ENCODE measurements at regions of chr9 and their contacts with region 1.

Region 1: GRCh38 chr9:84315278-84315877 is 25.2 kb downstream of the SLC28A3 start:
- DNase-seq: peak; percentile 75
- ATAC-seq: peak; percentile 80
- H3K4me3 Mint-ChIP-seq: no peak overlapping the region
- H3K27ac Mint-ChIP-seq: no peak overlapping the region
- H3K4me1 Mint-ChIP-seq: peaks cover 2% of the 10 kb centered on the region
- H3K27me3 Mint-ChIP-seq: no peaks in the 10 kb centered on the region

Region 2: GRCh38 chr9:83937911-83938323 is 377.5 kb before region 1 on chr9:
- CTCF ChIA-PET with region 1: interaction called, 6 read pairs
- POLR2A ChIA-PET with region 1: no interaction called
- intact Hi-C with region 1: loop called (anchors 1 kb)
- DNase-seq: peak; percentile 23
- ATAC-seq: peak; percentile 63
- H3K4me3 Mint-ChIP-seq: no peak overlapping the region
- H3K27ac Mint-ChIP-seq: no peak overlapping the region
- H3K4me1 Mint-ChIP-seq: no peaks in the 10 kb centered on the region
- H3K27me3 Mint-ChIP-seq: no peaks in the 10 kb centered on the region

Region 3: DNA sequence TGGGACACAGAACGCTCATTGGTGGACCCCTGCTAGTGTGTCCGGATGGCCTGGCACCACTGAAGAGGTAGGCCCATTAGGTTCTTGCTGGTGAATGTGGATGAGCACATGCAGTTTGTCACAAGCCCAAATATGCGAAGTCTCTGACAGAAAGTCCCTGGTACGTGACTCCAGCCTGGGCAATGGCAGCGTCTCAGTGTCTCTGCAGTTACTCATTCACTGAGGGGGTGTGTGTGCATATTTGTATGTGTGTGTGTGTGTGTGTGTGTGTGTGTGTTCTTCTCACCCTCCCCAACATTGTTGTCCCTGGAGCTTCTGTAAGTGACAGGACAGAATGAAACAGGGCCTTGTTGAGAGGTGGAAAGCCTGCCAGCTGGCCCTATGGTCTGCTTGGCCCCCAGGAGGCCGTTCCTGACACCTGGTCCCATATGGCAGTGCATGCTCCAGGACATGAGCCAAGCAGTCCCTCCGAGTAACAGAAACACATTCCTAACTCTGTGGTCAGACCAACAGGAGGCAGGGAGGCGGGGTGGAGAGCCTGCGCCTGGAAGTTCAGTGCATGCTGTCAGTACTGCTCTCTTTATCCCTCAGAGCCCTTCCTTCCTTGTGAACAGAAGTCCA is 144.7 kb before region 1 on chr9:
- CTCF ChIA-PET with region 1: interaction called, 5 read pairs
- POLR2A ChIA-PET with region 1: no interaction called
- intact Hi-C with region 1: loop called (anchors 2 to 5 kb)
- DNase-seq: no peak
- ATAC-seq: no peak
- H3K4me3 Mint-ChIP-seq: no peak overlapping the region
- H3K27ac Mint-ChIP-seq: no peak overlapping the region
- H3K4me1 Mint-ChIP-seq: no peaks in the 10 kb centered on the region
- H3K27me3 Mint-ChIP-seq: no peaks in the 10 kb centered on the region

Region 4: GRCh38 chr9:84261082-84261746 is 54.2 kb before region 1 on chr9:
- CTCF ChIA-PET with region 1: interaction called, 49 read pairs
- POLR2A ChIA-PET with region 1: no interaction called
- intact Hi-C with region 1: loop called (anchors 1 to 5 kb)
- DNase-seq: peak; percentile 77
- ATAC-seq: peak; percentile 82
- H3K4me3 Mint-ChIP-seq: no peak overlapping the region
- H3K27ac Mint-ChIP-seq: no peak overlapping the region
- H3K4me1 Mint-ChIP-seq: peaks cover 6% of the 10 kb centered on the region
- H3K27me3 Mint-ChIP-seq: peaks cover 8% of the 10 kb centered on the region

Region 5: DNA sequence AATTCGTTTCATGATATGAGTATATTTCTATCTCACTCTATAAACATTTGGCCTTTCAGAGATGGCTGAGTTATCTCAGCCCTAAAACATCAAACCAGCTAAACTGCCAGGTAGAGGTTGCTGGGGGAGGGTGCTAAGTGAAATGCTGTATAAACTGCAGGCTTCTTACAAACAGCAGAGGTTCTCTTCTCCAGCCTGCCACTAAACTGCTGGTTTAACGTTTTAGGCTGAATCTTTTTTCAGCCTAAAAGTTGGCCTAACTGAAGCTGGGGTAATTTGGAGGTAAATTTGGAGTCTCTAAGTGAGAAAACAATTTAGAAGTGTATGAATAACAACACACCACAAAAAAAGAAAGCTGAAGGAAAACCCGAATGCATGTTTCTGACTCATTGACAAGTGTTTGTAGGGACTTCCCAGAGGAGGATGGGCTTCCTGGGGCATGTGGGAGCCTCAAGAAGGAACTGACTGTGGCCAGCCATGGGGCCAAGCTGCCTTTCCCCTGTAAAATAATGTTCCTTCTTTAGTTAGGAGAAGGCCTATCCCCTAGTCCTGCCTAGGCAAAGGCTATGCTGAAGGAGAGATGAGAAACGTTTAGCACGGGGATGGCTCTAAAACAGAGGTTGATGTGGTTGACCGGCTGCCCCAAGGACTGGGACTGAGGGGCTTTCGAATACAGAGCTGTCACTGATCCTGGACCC is 19.1 kb before region 1 on chr9:
- CTCF ChIA-PET with region 1: interaction called, 12 read pairs
- POLR2A ChIA-PET with region 1: no interaction called
- intact Hi-C with region 1: loop called in 1 of 2 experiments (anchors 1 kb)
- DNase-seq: peak; percentile 79
- ATAC-seq: peak; percentile 82
- H3K4me3 Mint-ChIP-seq: peak overlapping the region; percentile 46
- H3K27ac Mint-ChIP-seq: peak overlapping the region; percentile 98
- H3K4me1 Mint-ChIP-seq: peaks cover 60% of the 10 kb centered on the region
- H3K27me3 Mint-ChIP-seq: no peaks in the 10 kb centered on the region